BJ (cell line): ENCODE measurements at regions of chr17 and their contacts with region 1.

Region 1: GRCh38 chr17:79393358-79394202 is 217.3 kb downstream of the RBFOX3 start:
- DNase-seq: no peak
- H3K4me3 ChIP-seq: no peak overlapping the region
- H3K27me3 ChIP-seq: peaks cover 18% of the 10 kb centered on the region
- CTCF ChIP-seq: peak; percentile 98

Region 2: GRCh38 chr17:79019632-79020584 is 373.7 kb before region 1 on chr17:
- CTCF ChIA-PET with region 1: interaction called, 120 read pairs
- POLR2A ChIA-PET with region 1: no interaction called
- DNase-seq: no peak
- H3K4me3 ChIP-seq: no peak overlapping the region
- H3K27me3 ChIP-seq: no peaks in the 10 kb centered on the region
- CTCF ChIP-seq: peak; percentile 77

Region 3: GRCh38 chr17:79045842-79046196 is 347.8 kb before region 1 on chr17:
- CTCF ChIA-PET with region 1: interaction called, 53 read pairs
- POLR2A ChIA-PET with region 1: no interaction called
- DNase-seq: no peak
- H3K4me3 ChIP-seq: no peak overlapping the region
- H3K27me3 ChIP-seq: no peaks in the 10 kb centered on the region; the same call in 1 of the 2 replicates
- CTCF ChIP-seq: peak; percentile 98

Region 4: GRCh38 chr17:79087428-79088143 is 306.0 kb before region 1 on chr17:
- CTCF ChIA-PET with region 1: interaction called, 181 read pairs
- POLR2A ChIA-PET with region 1: interaction called, 3 read pairs
- DNase-seq: no peak
- H3K4me3 ChIP-seq: no peak overlapping the region
- H3K27me3 ChIP-seq: no peaks in the 10 kb centered on the region
- CTCF ChIP-seq: peak; percentile 89

Region 5: GRCh38 chr17:79188048-79188447 is 205.5 kb before region 1 on chr17:
- CTCF ChIA-PET with region 1: interaction called, 14 read pairs
- POLR2A ChIA-PET with region 1: no interaction called
- DNase-seq: no peak
- H3K4me3 ChIP-seq: no peak overlapping the region
- H3K27me3 ChIP-seq: peaks cover 11% of the 10 kb centered on the region
- CTCF ChIP-seq: peak; percentile 56

Region 6: GRCh38 chr17:79382322-79382721 is 11.3 kb before region 1 on chr17:
- CTCF ChIA-PET with region 1: interaction called, 19 read pairs
- POLR2A ChIA-PET with region 1: no interaction called
- DNase-seq: no peak
- H3K4me3 ChIP-seq: no peak overlapping the region
- H3K27me3 ChIP-seq: peaks cover 1% of the 10 kb centered on the region; the same call in 1 of the 2 replicates
- CTCF ChIP-seq: no peak